OCI-LY7 (cell line): ENCODE measurements at regions of chr10 and their contacts with region 1.

Region 1: DNA sequence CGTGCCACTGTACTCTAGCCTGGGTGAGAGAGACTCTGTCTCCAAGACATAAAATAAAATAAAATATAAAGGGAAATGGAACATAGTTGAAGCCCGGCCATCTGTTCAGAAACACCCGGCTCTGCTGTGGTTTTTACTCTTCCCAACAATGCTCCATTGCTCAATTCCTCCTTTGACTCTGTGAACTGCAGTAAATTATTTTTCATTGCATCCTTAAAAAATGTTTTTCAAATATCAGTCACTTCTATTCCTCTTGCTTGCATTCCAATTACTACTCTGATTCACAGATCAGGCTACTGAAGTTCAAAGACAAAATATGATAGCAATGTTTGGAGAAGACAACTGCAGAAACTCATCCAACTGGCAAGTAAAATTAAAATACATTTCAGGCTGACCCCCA is 983.0 kb downstream of the SORCS1 start:
- DNase-seq: no peak
- H3K4me3 ChIP-seq: no peak overlapping the region
- H3K27ac ChIP-seq: no peak overlapping the region
- H3K4me1 ChIP-seq: no peaks in the 10 kb centered on the region
- CTCF ChIP-seq: no peak

Region 2: GRCh38 chr10:105181626-105182025 is 999.9 kb before region 1 on chr10:
- CTCF ChIA-PET with region 1: no interaction called
- POLR2A ChIA-PET with region 1: interaction called, 12 read pairs
- intact Hi-C with region 1: no loop called
- DNase-seq: no peak
- H3K4me3 ChIP-seq: no peak overlapping the region
- H3K27ac ChIP-seq: no peak overlapping the region
- H3K4me1 ChIP-seq: no peaks in the 10 kb centered on the region
- CTCF ChIP-seq: no peak

Region 3: DNA sequence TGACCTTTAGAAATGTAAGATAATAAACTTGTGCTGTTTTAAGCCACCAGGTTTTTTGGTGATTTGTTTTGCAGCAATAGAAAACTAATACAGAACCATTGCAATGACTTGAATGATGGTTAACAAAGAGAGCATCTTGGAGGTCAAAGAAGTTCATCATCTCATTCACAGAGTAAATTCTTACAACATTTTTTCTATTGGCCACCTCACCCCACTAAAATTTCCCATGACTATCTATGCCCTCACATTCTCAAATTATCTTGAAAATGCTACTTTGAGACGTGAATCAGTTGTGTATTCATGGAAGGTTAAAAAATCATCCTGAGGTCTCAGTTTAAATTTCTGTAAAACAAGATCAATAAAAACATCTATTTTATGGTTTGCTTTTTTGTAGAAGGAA is 228.8 kb after region 1 on chr10:
- CTCF ChIA-PET with region 1: no interaction called
- POLR2A ChIA-PET with region 1: no interaction called
- intact Hi-C with region 1: no loop called
- DNase-seq: no peak
- H3K4me3 ChIP-seq: no peak overlapping the region
- H3K27ac ChIP-seq: no peak overlapping the region
- H3K4me1 ChIP-seq: no peaks in the 10 kb centered on the region
- CTCF ChIP-seq: no peak